ENCODE measurements at regions of chr7 and their contacts with region 1.

Region 1: DNA sequence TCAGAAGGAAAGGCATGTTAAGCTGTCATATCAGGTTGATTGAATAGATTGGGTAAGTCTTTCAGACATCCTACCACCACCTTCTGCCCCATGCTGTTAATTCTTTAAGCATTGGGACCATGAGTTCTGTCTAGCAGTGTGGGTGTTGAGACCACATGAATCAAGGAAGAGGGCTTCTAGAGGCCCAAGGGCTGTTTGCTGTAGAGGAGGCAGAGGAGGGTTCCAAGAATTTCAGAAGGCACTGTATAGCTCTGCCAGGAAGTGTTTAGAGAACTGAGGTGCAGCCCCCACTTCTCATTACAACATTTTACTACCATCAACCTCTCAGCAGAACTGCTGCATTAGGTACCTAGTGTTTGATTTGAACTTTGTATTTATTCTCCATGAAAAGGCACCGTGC is 720.2 kb downstream of the AUTS2 start:
- DNase-seq: no peak
- H3K4me3 Mint-ChIP-seq: no peak overlapping the region
- H3K27ac Mint-ChIP-seq: no peak overlapping the region
- H3K4me1 Mint-ChIP-seq: peaks cover 21% of the 10 kb centered on the region
- H3K27me3 Mint-ChIP-seq: no peaks in the 10 kb centered on the region

Region 2: GRCh38 chr7:69696054-69696591 is 622.4 kb before region 1 on chr7:
- intact Hi-C with region 1: no loop called
- DNase-seq: no peak
- H3K4me3 Mint-ChIP-seq: no peak overlapping the region
- H3K27ac Mint-ChIP-seq: no peak overlapping the region
- H3K4me1 Mint-ChIP-seq: no peaks in the 10 kb centered on the region
- H3K27me3 Mint-ChIP-seq: no peaks in the 10 kb centered on the region

Region 3: DNA sequence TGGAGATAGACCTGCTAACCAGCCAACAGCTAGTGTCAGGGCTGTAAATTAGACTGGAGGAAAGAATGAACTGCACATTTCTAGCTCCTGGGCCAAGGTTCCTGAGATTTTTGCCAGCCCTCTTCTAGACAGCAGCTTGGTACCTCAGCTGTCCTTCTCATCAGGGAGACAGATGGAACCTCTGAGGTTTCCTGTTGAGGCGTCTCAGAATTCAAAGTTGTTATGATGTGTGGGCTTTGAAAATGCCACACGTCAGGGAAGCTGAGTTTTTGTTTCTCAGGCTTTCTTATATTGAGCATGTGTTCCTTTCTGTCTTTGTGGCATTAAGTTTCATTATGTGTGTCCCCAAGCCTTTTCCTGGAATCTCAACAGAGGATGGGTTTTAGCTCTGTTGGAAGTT is 16.4 kb after region 1 on chr7:
- intact Hi-C with region 1: loop called (anchors 1 kb)
- DNase-seq: no peak
- H3K4me3 Mint-ChIP-seq: no peak overlapping the region
- H3K27ac Mint-ChIP-seq: no peak overlapping the region
- H3K4me1 Mint-ChIP-seq: peaks cover 13% of the 10 kb centered on the region
- H3K27me3 Mint-ChIP-seq: no peaks in the 10 kb centered on the region

Measured in activated T-helper 1 cell treated with anti-CD3 and anti-CD28 coated beads, Interleukin-12 subunit alpha, Interleukin-12 subunit beta, Interleukin-2, Interleukin-4 antibody, amounts not matched to agents 30 ng/mL and 10 ng/mL and 1 ng/mL, durations not matched to agents 14 hours and 24 hours and 36 hours (primary cell).